CD4-positive, alpha-beta T cell (primary cell): ENCODE measurements at regions of chr6 and their contacts with region 1.

Region 1: DNA sequence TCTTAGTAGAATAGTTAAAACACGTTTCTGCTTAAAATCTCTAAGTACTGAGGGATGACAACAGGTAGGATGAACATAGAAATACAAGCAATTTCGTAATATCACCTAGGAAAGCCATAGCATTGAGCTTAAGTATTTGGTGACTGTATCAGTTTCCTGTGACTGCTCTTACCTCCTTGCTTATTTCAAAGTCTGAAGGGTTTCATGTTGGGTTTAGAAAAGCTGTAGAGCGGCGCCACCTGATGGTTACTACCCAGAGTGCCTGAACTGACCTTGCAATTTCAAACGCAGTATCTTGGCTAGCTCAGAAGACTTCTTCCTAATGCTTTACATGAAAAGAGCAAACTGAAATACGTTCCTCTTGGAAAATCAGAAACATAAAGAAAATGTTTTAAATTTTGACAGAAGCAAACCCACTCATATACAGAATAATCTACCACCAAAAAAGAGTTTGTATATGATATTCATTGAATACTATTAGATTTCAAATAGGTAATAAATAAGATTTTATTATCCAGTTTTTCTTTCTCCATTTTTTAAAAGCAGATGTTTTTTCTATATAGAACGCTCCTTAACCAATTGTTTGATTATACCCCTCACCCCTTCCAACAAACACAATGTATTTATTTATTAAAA is 82.3 kb upstream of the RIPOR2 start:
- DNase-seq: peak; percentile 68 to 92 (median 79)
- ATAC-seq: peak; percentile 75
- H3K4me3 ChIP-seq: no peak overlapping the region
- H3K4me3 Mint-ChIP-seq: peak overlapping the region; percentile 46
- H3K27ac ChIP-seq: peak overlapping the region; percentile 44 to 50
- H3K27ac Mint-ChIP-seq: peak overlapping the region; percentile 89
- H3K4me1 ChIP-seq: peaks cover 35% of the 10 kb centered on the region
- H3K4me1 Mint-ChIP-seq: peaks cover 44% of the 10 kb centered on the region
- H3K27me3 ChIP-seq: no peaks in the 10 kb centered on the region
- H3K27me3 Mint-ChIP-seq: no peaks in the 10 kb centered on the region
- CTCF ChIP-seq: peak; percentile 87

Region 2: GRCh38 chr6:24581084-24581669 is 436.9 kb before region 1 on chr6:
- CTCF ChIA-PET with region 1: interaction called, 6 read pairs
- POLR2A ChIA-PET with region 1: interaction called, 3 read pairs
- intact Hi-C with region 1: loop called (anchors 1 to 2 kb)
- DNase-seq: peak; percentile 64 to 86 (median 72)
- ATAC-seq: peak; percentile 91
- H3K4me3 ChIP-seq: no peak overlapping the region
- H3K4me3 Mint-ChIP-seq: no peak overlapping the region
- H3K27ac ChIP-seq: no peak overlapping the region
- H3K27ac Mint-ChIP-seq: no peak overlapping the region
- H3K4me1 ChIP-seq: no peaks in the 10 kb centered on the region
- H3K4me1 Mint-ChIP-seq: peaks cover 5% of the 10 kb centered on the region
- H3K27me3 ChIP-seq: no peaks in the 10 kb centered on the region
- H3K27me3 Mint-ChIP-seq: peaks cover 4% of the 10 kb centered on the region
- CTCF ChIP-seq: peak; percentile 80

Region 3: GRCh38 chr6:24720604-24721460 is 297.2 kb before region 1 on chr6:
- CTCF ChIA-PET with region 1: no interaction called
- POLR2A ChIA-PET with region 1: interaction called, 7 read pairs
- intact Hi-C with region 1: loop called in 1 of 2 experiments (anchors 5 kb)
- DNase-seq: peak; percentile 99 to 100 (median 100)
- ATAC-seq: peak; percentile 84
- H3K4me3 ChIP-seq: peak overlapping the region; percentile 98
- H3K4me3 Mint-ChIP-seq: peak overlapping the region; percentile 92
- H3K27ac ChIP-seq: peak overlapping the region; percentile 100
- H3K27ac Mint-ChIP-seq: peak overlapping the region; percentile 94
- H3K4me1 ChIP-seq: peaks cover 25% of the 10 kb centered on the region
- H3K4me1 Mint-ChIP-seq: peaks cover 51% of the 10 kb centered on the region
- H3K27me3 ChIP-seq: no peaks in the 10 kb centered on the region
- H3K27me3 Mint-ChIP-seq: no peaks in the 10 kb centered on the region
- CTCF ChIP-seq: no peak

Region 4: GRCh38 chr6:24855395-24856245 is 162.4 kb before region 1 on chr6:
- CTCF ChIA-PET with region 1: interaction called, 95 read pairs
- POLR2A ChIA-PET with region 1: interaction called, 53 read pairs
- intact Hi-C with region 1: loop called (anchors 1 kb)
- DNase-seq: peak; percentile 49 to 90 (median 61)
- ATAC-seq: peak; percentile 66
- H3K4me3 ChIP-seq: no peak overlapping the region
- H3K4me3 Mint-ChIP-seq: peak overlapping the region; percentile 17
- H3K27ac ChIP-seq: peak overlapping the region; percentile 35 to 61
- H3K27ac Mint-ChIP-seq: peak overlapping the region; percentile 93
- H3K4me1 ChIP-seq: peaks cover 51% of the 10 kb centered on the region
- H3K4me1 Mint-ChIP-seq: peaks cover 67% of the 10 kb centered on the region
- H3K27me3 ChIP-seq: no peaks in the 10 kb centered on the region
- H3K27me3 Mint-ChIP-seq: no peaks in the 10 kb centered on the region
- CTCF ChIP-seq: peak; percentile 79

Region 5: DNA sequence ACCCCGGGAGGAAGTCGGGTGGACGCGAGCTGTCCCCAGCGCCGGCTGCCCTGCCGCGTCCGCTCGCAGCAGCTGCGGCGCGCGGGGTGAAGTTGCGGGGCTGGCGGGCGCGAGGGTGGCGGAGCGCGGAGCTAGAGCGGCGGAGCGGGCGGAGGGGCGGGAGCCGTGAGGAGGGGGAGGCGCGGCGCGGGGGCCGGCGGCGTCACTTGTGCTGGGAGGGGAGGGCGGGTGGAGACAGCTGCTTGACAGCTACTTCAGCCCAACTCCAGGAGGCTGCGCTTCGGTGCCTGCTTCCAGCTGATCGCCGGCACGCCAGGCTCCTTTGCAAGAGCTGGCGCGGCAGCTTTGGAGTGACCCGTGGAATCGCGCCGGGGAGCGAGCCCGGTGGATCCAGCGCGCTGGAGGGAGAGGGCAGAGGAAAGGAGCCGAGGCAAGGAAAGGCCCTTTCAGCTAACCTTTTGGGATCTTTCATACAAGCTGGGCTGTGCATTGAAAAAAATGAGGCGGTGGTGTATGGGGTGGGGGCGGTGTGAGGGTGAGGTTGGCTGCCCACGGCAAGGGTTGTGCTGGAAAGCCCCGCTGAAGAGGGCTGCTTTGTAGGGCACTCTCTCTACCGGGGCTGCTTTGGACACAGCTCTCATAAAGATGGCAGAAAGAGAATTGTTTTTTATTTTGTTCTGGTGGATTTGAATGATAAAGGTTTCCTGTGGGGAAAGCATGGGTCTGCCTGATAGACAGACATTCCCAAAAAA is 106.9 kb before region 1 on chr6:
- CTCF ChIA-PET with region 1: interaction called, 20 read pairs
- POLR2A ChIA-PET with region 1: interaction called, 26 read pairs
- intact Hi-C with region 1: no loop called
- DNase-seq: peak in 13 of 14 experiments; percentile 27 to 79 (median 58)
- ATAC-seq: peak; percentile 46
- H3K4me3 ChIP-seq: peak overlapping the region; percentile 65
- H3K4me3 Mint-ChIP-seq: peak overlapping the region; percentile 95
- H3K27ac ChIP-seq: peak overlapping the region; percentile 73 to 88
- H3K27ac Mint-ChIP-seq: peak overlapping the region; percentile 97
- H3K4me1 ChIP-seq: peaks cover 93% of the 10 kb centered on the region
- H3K4me1 Mint-ChIP-seq: peaks cover 99% of the 10 kb centered on the region
- H3K27me3 ChIP-seq: no peaks in the 10 kb centered on the region
- H3K27me3 Mint-ChIP-seq: no peaks in the 10 kb centered on the region
- CTCF ChIP-seq: no peak

Region 6: GRCh38 chr6:25006565-25007001 is 11.5 kb before region 1 on chr6:
- CTCF ChIA-PET with region 1: interaction called, 26 read pairs
- POLR2A ChIA-PET with region 1: interaction called, 13 read pairs
- intact Hi-C with region 1: no loop called
- DNase-seq: peak in 6 of 14 experiments; percentile 24 to 89 (median 54)
- ATAC-seq: peak; percentile 66
- H3K4me3 ChIP-seq: peak overlapping the region; percentile 3
- H3K4me3 Mint-ChIP-seq: peak overlapping the region; percentile 69
- H3K27ac ChIP-seq: peak overlapping the region; percentile 73 to 89
- H3K27ac Mint-ChIP-seq: peak overlapping the region; percentile 74
- H3K4me1 ChIP-seq: peaks cover 49% of the 10 kb centered on the region
- H3K4me1 Mint-ChIP-seq: peaks cover 80% of the 10 kb centered on the region
- H3K27me3 ChIP-seq: no peaks in the 10 kb centered on the region
- H3K27me3 Mint-ChIP-seq: no peaks in the 10 kb centered on the region
- CTCF ChIP-seq: no peak

Region 7: DNA sequence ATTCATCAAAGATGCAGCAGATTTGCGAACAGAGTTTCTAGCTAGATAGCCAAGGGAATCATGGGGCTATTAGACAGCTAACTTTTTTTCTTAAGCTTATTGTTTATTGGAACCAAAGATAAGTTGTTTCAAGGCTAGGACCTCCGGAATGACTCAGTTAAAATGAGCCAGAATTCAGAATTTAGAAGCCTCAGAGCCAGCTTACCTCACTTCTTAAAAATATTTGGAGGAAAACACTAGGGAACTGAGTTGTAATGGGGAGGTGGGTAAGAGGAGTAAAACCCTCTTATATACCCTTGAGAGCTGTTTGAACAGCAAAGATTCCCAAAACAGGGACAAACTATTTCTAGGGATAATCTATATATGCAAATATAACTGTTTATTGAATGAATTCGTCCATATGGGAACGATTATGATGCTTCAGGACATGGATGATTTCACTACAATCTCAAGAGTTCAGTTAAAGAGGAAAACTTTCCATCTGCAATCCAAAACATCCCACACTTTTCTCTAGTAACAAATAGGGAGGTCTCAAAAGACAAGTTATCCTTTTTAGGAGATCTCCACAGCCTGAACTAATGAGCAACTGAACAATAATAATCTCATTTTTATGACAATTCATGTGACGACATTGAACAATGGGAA is 248.5 kb after region 1 on chr6:
- CTCF ChIA-PET with region 1: no interaction called
- POLR2A ChIA-PET with region 1: no interaction called
- intact Hi-C with region 1: no loop called
- DNase-seq: no peak
- ATAC-seq: no peak
- H3K4me3 ChIP-seq: no peak overlapping the region
- H3K4me3 Mint-ChIP-seq: no peak overlapping the region
- H3K27ac ChIP-seq: no peak overlapping the region
- H3K27ac Mint-ChIP-seq: no peak overlapping the region
- H3K4me1 ChIP-seq: no peaks in the 10 kb centered on the region
- H3K4me1 Mint-ChIP-seq: peaks cover 4% of the 10 kb centered on the region
- H3K27me3 ChIP-seq: no peaks in the 10 kb centered on the region
- H3K27me3 Mint-ChIP-seq: peaks cover 6% of the 10 kb centered on the region
- CTCF ChIP-seq: no peak